ENCODE measurements at regions of chr16 and their contacts with region 1.

Region 1: GRCh38 chr16:68227183-68227793 is 8.6 kb downstream of the ESRP2 start:
- DNase-seq: peak; percentile 65
- ATAC-seq: peak; percentile 70
- H3K4me3 Mint-ChIP-seq: no peak overlapping the region
- H3K27ac Mint-ChIP-seq: peak overlapping the region; percentile 81
- H3K4me1 Mint-ChIP-seq: peaks cover 33% of the 10 kb centered on the region
- H3K27me3 Mint-ChIP-seq: no peaks in the 10 kb centered on the region

Region 2: DNA sequence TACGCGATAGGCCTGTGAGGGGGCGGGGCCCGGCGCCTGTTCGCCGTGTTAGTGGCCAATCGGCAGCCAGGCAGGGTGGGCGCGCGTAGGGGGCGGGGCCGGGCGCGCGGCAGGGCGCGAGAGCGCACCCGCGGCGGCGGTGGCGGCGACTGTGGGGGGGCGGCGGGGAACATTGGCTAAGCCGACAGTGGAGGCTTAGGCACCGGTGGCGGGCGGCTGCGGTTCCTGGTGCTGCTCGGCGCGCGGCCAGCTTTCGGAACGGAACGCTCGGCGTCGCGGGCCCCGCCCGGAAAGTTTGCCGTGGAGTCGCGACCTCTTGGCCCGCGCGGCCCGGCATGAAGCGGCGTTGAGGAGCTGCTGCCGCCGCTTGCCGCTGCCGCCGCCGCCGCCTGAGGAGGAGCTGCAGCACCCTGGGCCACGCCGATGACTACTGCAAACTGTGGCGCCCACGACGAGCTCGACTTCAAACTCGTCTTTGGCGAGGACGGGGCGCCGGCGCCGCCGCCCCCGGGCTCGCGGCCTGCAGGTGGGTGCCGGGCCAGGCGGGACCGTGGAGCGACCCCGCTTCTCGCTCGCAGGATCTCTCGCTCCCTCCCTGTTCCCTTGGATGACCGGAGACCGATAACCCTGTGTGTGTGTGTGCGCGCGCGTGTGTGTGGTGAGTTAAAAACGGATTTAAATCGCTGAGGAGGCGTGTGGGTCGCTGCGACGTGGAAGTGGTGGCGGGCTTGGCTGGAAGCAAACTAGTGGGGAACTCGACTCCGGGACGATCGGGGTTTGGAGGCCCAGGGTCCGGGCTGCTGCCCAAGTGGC is 141.8 kb before region 1 on chr16 and contains the start of gene NFATC3:
- CTCF ChIA-PET with region 1: interaction called, 10 read pairs
- DNase-seq: peak; percentile 99
- ATAC-seq: peak; percentile 79
- H3K4me3 Mint-ChIP-seq: peak within 1 kb of the TSS; percentile 94
- H3K27ac Mint-ChIP-seq: peak within 1 kb of the TSS; percentile 94
- H3K4me1 Mint-ChIP-seq: peaks cover 57% of the 10 kb centered on the region
- H3K27me3 Mint-ChIP-seq: no peaks in the 10 kb centered on the region
- total RNA-seq, gene NFATC3: 176 to 183 TPM

Region 3: GRCh38 chr16:68214726-68215125 is 12.6 kb before region 1 on chr16:
- CTCF ChIA-PET with region 1: interaction called, 15 read pairs
- DNase-seq: no peak
- ATAC-seq: no peak
- H3K4me3 Mint-ChIP-seq: no peak overlapping the region
- H3K27ac Mint-ChIP-seq: no peak overlapping the region
- H3K4me1 Mint-ChIP-seq: peaks cover 24% of the 10 kb centered on the region
- H3K27me3 Mint-ChIP-seq: no peaks in the 10 kb centered on the region

Region 4: DNA sequence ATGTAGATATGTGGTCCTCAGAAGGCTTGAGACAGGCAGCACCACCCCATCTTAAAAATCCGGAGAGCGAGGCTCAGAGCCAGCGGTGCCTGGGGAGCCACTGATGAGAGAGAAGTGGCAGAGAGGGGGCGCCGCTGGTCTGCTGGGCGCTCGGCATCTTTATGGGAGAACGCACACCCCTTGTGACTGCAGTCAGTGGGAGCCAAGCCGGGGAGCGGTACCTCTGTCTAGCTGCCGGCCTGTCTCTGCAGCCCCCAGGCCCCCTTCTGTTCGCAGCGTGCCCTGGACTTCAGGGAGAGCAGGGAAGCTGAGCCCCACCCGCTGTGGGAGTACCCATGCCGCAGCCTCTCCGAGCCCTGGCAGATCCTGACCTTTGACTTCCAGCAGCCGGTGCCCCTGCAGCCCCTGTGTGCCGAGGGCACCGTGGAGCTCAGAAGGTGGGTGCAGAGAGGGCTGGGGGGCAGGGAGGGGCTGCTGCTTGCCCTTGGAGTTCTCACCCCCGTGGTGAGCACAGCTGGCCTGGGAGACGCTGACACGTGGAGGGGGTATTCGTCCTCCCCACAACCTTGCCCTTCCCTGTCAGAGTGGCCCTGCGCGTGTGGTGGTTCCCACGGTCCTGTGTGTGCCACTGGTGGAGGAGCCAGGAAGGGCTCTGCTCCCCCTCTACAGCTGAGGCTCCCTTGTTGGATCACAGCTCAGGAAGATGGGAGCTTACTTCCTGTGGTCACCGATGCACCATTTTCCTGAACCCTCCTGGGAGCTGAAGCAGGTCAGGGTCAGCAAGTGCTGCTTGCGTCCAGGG is 128.4 kb after region 1 on chr16:
- CTCF ChIA-PET with region 1: no interaction called
- DNase-seq: no peak
- ATAC-seq: peak; percentile 9
- H3K4me3 Mint-ChIP-seq: no peak overlapping the region
- H3K27ac Mint-ChIP-seq: peak overlapping the region; percentile 19
- H3K4me1 Mint-ChIP-seq: peaks cover 39% of the 10 kb centered on the region
- H3K27me3 Mint-ChIP-seq: no peaks in the 10 kb centered on the region

Measured in activated CD8-positive, alpha-beta memory T cell treated with anti-CD3 and anti-CD28 coated beads, Interleukin-2, amount 10 ng/mL, durations not matched to agents 7 days and 5 days (primary cell).